Endothelial cell of umbilical vein (primary cell): ENCODE measurements at regions of chr2 and their contacts with region 1.

Region 1: GRCh38 chr2:210171309-210172203 is at the start of gene KANSL1L:
- DNase-seq: peak; percentile 97
- H3K4me3 ChIP-seq: peak within 1 kb of the TSS; percentile 83 to 96 (median 92)
- H3K27ac ChIP-seq: peak within 1 kb of the TSS; percentile 87
- H3K4me1 ChIP-seq: peaks cover 12% of the 10 kb centered on the region
- H3K27me3 ChIP-seq: peaks cover 0 to 2% of the 10 kb centered on the region in 2 experiments
- CTCF ChIP-seq: no peak
- POLR2A ChIP-seq: peak; percentile 57
- total RNA-seq, gene KANSL1L: 13.4 and 14.0 TPM in 2 replicates

Region 2: DNA sequence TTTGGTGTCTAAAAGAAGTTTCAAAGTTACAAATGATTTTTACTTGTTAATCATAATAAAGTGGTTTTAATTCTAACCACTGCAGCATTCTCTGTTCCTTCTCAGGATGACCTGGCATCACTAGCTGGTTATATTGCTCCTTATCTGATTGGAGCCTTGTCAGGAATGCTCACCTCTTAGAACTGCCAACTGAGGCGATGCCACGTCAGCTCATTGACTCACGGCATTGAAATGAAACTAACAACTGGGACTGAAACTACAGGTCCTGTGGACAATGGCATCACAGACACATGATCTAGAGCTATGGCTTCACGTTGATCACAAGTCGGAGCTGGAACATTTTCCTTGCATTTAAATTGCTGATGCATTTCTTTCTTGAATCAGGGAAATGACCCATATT is 802.7 kb before region 1 on chr2:
- CTCF ChIA-PET with region 1: no interaction called
- POLR2A ChIA-PET with region 1: no interaction called
- dilution Hi-C with region 1: no loop called
- intact Hi-C with region 1: loop called (anchors 10 kb)
- DNase-seq: peak; percentile 96
- H3K4me3 ChIP-seq: no peak overlapping the region
- H3K27ac ChIP-seq: peak overlapping the region; percentile 4
- H3K4me1 ChIP-seq: peaks cover 23% of the 10 kb centered on the region
- H3K27me3 ChIP-seq: no peaks in the 10 kb centered on the region
- CTCF ChIP-seq: no peak
- POLR2A ChIP-seq: no peak

Region 3: GRCh38 chr2:209525834-209526281 is 645.7 kb before region 1 on chr2:
- CTCF ChIA-PET with region 1: no interaction called
- POLR2A ChIA-PET with region 1: no interaction called
- dilution Hi-C with region 1: no loop called
- intact Hi-C with region 1: loop called (anchors 10 kb)
- DNase-seq: peak; percentile 91
- H3K4me3 ChIP-seq: peak overlapping the region in 1 of 3 experiments; percentile 72
- H3K27ac ChIP-seq: peak overlapping the region; percentile 99
- H3K4me1 ChIP-seq: peaks cover 37% of the 10 kb centered on the region
- H3K27me3 ChIP-seq: no peaks in the 10 kb centered on the region
- CTCF ChIP-seq: no peak
- POLR2A ChIP-seq: no peak

Region 4: DNA sequence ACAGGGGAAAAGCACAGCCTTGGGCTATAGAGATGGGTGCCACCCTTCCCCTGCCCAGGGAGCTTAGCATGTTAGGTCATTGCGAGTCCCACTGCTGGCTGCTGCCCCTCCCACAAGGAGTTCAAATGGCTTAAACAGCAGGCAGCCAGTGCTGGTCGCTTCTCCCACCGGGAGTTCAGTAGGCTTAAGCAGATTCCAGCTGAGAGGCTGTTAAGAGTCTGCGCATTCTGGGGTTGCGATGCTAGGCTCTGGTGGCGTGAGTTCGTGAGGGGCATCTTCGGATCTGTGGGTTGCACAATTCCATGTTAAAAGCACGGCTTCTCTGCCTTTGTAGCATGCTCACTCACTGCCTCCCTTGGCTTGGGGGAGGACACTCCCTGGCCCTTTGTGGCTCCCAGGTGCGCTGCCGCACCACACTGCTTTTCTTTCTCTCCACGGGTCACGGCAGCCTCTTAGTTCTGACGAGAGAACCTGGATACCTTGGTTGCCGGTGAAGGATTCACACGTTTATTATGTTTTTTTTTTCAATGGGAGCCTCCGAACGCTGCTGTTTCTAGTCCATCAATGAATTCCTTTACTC is 306.8 kb before region 1 on chr2:
- CTCF ChIA-PET with region 1: no interaction called
- POLR2A ChIA-PET with region 1: no interaction called
- dilution Hi-C with region 1: no loop called
- intact Hi-C with region 1: no loop called
- DNase-seq: no peak
- H3K4me3 ChIP-seq: no peak overlapping the region
- H3K27ac ChIP-seq: no peak overlapping the region
- H3K4me1 ChIP-seq: no peaks in the 10 kb centered on the region
- H3K27me3 ChIP-seq: no peaks in the 10 kb centered on the region
- CTCF ChIP-seq: no peak
- POLR2A ChIP-seq: no peak

Region 5: DNA sequence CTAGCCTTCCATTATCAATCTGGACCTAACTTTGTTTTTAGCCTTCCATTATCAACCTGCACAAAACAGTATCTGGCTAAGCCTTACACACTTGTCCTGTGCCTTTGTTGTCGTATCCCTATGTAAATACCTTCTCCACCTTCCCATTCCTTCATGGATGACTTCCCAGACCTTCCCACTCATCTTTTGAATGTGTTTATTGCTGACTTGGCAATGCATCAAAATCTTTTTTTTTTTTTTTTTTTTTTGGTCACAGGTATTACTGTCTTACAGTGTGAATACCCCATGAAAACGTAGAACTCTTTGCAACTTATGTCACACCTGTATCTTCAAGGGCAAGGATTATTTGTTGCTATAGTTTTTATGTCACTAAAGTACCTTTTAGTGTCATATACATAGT is 143.4 kb before region 1 on chr2:
- CTCF ChIA-PET with region 1: no interaction called
- POLR2A ChIA-PET with region 1: no interaction called
- dilution Hi-C with region 1: no loop called
- intact Hi-C with region 1: no loop called
- DNase-seq: no peak
- H3K4me3 ChIP-seq: no peak overlapping the region
- H3K27ac ChIP-seq: no peak overlapping the region
- H3K4me1 ChIP-seq: no peaks in the 10 kb centered on the region
- H3K27me3 ChIP-seq: no peaks in the 10 kb centered on the region
- CTCF ChIP-seq: no peak
- POLR2A ChIP-seq: no peak

Region 6: GRCh38 chr2:210072922-210073509 is 98.5 kb before region 1 on chr2:
- CTCF ChIA-PET with region 1: interaction called, 8 read pairs
- POLR2A ChIA-PET with region 1: no interaction called
- dilution Hi-C with region 1: no loop called
- intact Hi-C with region 1: loop called (anchors 1 kb)
- DNase-seq: peak; percentile 78
- H3K4me3 ChIP-seq: peak overlapping the region in 1 of 3 experiments; percentile 17
- H3K27ac ChIP-seq: no peak overlapping the region
- H3K4me1 ChIP-seq: no peaks in the 10 kb centered on the region
- H3K27me3 ChIP-seq: no peaks in the 10 kb centered on the region
- CTCF ChIP-seq: peak; percentile 49 to 52
- POLR2A ChIP-seq: no peak

Region 7: GRCh38 chr2:210215120-210215519 is 43.6 kb after region 1 on chr2:
- CTCF ChIA-PET with region 1: no interaction called
- POLR2A ChIA-PET with region 1: no interaction called
- dilution Hi-C with region 1: no loop called
- intact Hi-C with region 1: no loop called
- DNase-seq: no peak
- H3K4me3 ChIP-seq: no peak overlapping the region
- H3K27ac ChIP-seq: no peak overlapping the region
- H3K4me1 ChIP-seq: no peaks in the 10 kb centered on the region
- H3K27me3 ChIP-seq: peaks cover 0 to 5% of the 10 kb centered on the region in 2 experiments
- CTCF ChIP-seq: no peak
- POLR2A ChIP-seq: no peak